ENCODE measurements at regions of chr9 and their contacts with region 1.

Region 1: GRCh38 chr9:129139993-129140396 is 28.8 kb downstream of the PTPA start:
- DNase-seq: peak; percentile 91
- CTCF ChIP-seq: no peak

Region 2: GRCh38 chr9:129110740-129111527 is 29.1 kb before region 1 on chr9 and contains the starts of genes CRAT and PTPA:
- CTCF ChIA-PET with region 1: interaction called, 25 read pairs
- POLR2A ChIA-PET with region 1: interaction called, 5 read pairs
- DNase-seq: peak; percentile 100
- CTCF ChIP-seq: no peak

Region 3: DNA sequence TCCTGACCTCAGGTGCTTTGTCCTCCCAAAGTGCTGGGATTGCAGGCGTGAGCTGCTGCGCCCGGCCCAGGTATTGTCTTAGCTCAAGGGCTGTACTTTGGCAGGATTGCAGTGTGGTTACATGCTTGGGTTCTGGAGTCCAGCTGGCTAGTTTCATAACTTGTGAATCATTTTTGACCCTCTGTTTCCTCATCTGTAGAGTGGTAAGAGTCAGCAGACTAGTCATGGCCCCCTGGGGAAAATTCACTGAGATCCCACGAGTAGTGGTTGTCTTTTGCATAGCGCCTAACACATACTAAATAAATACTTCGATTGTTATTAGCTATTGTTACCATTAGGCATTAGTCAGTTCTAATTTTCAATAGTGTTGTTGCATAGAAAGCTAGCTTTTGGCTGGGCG is 14.5 kb before region 1 on chr9:
- CTCF ChIA-PET with region 1: interaction called, 125 read pairs
- POLR2A ChIA-PET with region 1: no interaction called
- DNase-seq: no peak
- CTCF ChIP-seq: no peak

Region 4: DNA sequence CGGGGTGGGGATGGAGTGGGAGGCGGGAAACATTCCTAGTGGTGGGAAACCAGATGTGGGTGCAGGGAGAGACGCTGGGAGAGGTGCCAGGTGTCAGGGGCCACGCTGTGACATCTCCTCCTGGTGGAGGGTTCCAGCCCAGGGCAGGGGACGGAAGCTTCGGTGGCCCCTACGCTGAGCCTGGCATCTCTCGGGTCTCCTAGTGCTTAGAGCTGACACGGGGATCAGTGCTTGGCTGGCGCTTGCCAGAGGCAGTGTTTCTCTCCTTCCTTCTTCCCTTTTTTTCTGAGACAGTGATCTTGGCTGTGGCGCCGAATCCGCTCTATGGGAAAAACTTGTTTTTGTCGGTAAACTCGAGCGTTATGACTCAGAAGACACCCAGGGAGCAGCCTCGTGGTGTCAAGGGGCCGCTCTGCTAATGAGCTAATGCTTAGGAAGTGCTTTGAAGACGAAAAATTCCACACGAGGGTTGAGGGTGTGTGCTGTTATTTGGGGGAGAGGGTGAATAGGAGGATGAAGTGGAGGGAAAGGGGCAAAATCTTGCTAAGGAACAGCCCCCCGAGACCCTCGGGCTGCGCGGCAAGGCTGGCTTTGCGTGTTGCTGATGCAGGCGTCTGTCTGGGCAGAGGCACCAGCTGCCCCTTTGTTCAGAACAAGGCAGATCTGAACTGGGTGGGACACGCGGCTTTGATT is 58.5 kb after region 1 on chr9:
- CTCF ChIA-PET with region 1: no interaction called
- POLR2A ChIA-PET with region 1: no interaction called
- DNase-seq: no peak
- CTCF ChIP-seq: no peak

Region 5: DNA sequence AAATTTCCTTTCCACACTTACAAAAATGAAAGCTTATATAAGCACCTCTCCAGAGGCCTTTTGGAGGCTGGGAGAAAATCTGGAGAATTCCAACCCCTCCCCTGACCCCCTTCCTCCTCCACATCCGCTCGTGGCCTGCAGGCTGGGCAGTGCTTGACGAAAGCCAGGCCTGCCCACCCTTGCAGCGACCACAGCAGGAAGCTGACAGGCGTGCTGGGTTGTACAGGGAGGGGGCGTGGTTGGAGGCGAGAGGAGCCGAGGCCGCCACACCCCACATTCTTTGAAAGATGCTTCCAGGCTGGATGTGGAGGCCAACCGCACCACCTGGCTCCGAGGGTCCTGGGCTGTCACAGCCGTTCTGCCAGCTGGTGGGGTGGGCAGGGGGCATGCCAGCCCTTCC is 85.8 kb after region 1 on chr9:
- CTCF ChIA-PET with region 1: no interaction called
- POLR2A ChIA-PET with region 1: no interaction called
- DNase-seq: no peak
- CTCF ChIP-seq: no peak

Region 6: GRCh38 chr9:129580211-129580915 is 440.4 kb after region 1 on chr9:
- CTCF ChIA-PET with region 1: interaction called, 14 read pairs
- POLR2A ChIA-PET with region 1: no interaction called
- DNase-seq: peak; percentile 74
- CTCF ChIP-seq: no peak

Region 7: GRCh38 chr9:129610473-129611301 is 470.7 kb after region 1 on chr9:
- CTCF ChIA-PET with region 1: interaction called, 28 read pairs
- POLR2A ChIA-PET with region 1: interaction called, 3 read pairs
- DNase-seq: peak; percentile 82
- CTCF ChIP-seq: peak; percentile 97

Region 8: GRCh38 chr9:129626079-129626624 is 486.2 kb after region 1 on chr9 and contains the start of gene NTMT1:
- CTCF ChIA-PET with region 1: interaction called, 308 read pairs
- POLR2A ChIA-PET with region 1: interaction called, 4 read pairs
- DNase-seq: peak; percentile 94
- CTCF ChIP-seq: no peak

Measured in GM10248 (cell line).